A673 (cell line): ENCODE measurements at regions of chr15 and their contacts with region 1.

Region 1: DNA sequence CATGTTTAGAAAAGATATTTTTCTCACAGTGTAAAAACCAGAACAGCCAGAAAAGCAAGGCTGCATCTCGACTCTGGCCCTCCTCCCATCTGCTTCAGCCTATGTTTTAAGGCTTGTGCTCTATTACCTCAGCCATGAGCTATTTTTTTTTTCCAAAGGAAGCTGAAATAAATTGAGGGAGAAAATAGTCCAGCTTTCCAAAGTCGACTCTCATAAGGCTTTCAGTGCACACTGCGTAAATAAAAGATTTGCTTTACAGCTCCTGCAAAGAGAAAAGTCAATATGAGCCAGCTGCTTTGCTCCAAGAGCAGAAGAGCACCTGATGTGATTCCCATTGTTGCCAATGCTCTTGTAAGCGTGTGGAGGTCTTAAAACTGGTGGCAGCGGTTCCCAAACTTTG is 26.7 kb downstream of the SCG3 start:
- DNase-seq: no peak
- H3K4me3 ChIP-seq: no peak overlapping the region
- H3K27ac ChIP-seq: no peak overlapping the region
- H3K4me1 ChIP-seq: no peaks in the 10 kb centered on the region
- H3K27me3 ChIP-seq: peaks cover 12% of the 10 kb centered on the region
- CTCF ChIP-seq: no peak

Region 2: DNA sequence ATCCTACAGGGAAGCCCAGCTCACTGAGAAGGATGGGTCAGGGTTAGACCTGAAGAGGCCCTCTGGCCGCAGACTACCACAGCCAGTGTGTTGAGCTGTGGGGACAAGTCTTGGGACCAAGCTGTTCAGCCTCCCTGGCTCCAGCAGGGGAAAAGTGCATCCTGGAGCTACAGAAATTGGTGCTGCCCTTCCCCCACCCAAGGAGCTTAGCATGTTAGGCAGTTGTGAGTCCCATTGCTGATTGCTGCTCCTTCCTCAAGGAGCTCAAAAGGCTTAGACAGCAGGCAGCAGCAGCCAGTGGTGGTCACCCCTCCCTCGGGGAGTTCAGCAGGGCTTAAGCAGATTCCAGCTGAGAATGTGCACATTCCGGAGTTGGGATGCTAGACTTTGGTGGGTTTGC is 1754.6 kb before region 1 on chr15:
- CTCF ChIA-PET with region 1: no interaction called
- POLR2A ChIA-PET with region 1: interaction called, 11 read pairs
- intact Hi-C with region 1: no loop called
- DNase-seq: no peak
- H3K4me3 ChIP-seq: no peak overlapping the region
- H3K27ac ChIP-seq: no peak overlapping the region
- H3K4me1 ChIP-seq: no peaks in the 10 kb centered on the region
- H3K27me3 ChIP-seq: no peaks in the 10 kb centered on the region
- CTCF ChIP-seq: no peak